HEK293T (cell line): ENCODE measurements at regions of chr4 and their contacts with region 1.

Region 1: DNA sequence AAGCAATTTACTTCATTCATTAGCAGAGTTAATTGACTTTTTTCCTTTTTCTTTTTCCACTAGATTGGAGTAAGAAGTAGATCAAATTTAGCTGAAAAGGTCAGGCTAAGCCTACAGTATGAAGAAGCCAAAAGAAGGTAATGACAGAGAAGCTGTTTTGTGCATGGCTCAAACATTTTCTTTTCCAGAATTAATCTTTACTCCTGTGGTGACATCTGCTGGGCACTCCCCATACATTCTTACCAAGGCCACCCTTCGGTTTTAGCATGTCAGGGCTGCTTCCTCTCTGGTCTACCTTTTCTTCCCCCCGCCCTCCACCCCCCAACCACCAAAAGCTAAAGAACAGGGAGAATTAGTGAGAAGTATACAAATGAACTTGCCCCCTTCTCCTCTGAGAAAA is 70.2 kb downstream of the CLDN22 start:
- DNase-seq: peak; percentile 10

Region 2: GRCh38 chr4:183261953-183262775 is 12.3 kb after region 1 on chr4:
- CTCF ChIA-PET with region 1: interaction called, 15 read pairs
- POLR2A ChIA-PET with region 1: no interaction called
- DNase-seq: peak; percentile 61